Aorta (tissue), 5 donors: ENCODE measurements at regions of chr9 and their contacts with region 1.

Region 1: GRCh38 chr9:19379697-19380046 is 364 bp downstream of the RPS6 start:
- DNase-seq: peak in 1 of 2 donors; percentile 63
- ATAC-seq: peak; percentile 74
- H3K4me3 ChIP-seq: peak overlapping the region; percentile 5 to 54
- H3K27ac ChIP-seq: peak overlapping the region; percentile 49 to 73
- H3K4me1 ChIP-seq: no peaks in the 10 kb centered on the region
- H3K27me3 ChIP-seq: no peaks in the 10 kb centered on the region

Region 2: DNA sequence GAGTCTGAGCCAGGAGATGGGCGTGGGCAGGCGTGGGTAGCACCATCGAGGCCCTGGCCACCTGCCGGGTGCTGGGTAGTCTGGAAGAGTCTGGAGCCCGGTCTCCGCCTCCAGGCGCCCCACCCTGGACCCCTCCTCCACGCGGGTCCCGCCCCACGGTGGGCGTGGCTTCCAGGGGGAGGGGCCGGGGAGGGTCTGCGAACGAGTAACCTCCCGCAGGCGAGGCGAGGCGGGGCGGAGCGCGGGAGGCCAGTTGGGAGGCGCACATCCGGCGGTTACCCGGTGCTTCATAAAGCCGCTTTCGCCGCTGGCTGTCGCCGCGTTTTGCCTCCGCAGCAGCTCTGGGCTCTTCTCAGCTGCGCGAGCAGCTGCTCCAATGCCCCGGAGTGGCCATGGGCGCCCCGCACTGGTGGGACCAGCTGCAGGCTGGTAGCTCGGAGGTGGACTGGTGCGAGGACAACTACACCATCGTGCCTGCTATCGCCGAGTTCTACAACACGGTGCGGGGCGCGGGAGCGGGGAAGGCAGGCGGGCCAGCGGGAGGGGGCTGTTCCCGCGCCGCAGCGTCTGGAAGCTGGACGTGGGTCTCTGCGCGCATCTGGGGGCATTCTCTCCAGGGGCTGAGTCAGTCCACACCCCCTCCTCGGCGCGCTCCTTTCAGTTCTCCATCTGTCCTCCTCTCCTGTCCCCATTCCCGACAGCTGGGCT is 29.2 kb after region 1 on chr9 and contains the start of gene ACER2:
- intact Hi-C with region 1: loop called in 1 of 2 experiments (anchors 1 kb)
- DNase-seq: peak; percentile 96 to 99
- ATAC-seq: peak; percentile 98
- H3K4me3 ChIP-seq: peak within 1 kb of the TSS; percentile 37 to 74
- H3K27ac ChIP-seq: peak within 1 kb of the TSS in 1 of 2 donors; percentile 41
- H3K4me1 ChIP-seq: peaks cover 0 to 2% of the 10 kb centered on the region in 2 donors
- H3K27me3 ChIP-seq: no peaks in the 10 kb centered on the region
- total RNA-seq, gene ACER2: 4.9 to 11.2 TPM

Region 3: GRCh38 chr9:19431361-19432171 is 51.9 kb after region 1 on chr9:
- intact Hi-C with region 1: loop called in 1 of 2 experiments (anchors 10 kb)
- DNase-seq: peak; percentile 82 to 84
- ATAC-seq: peak; percentile 96
- H3K4me3 ChIP-seq: no peak overlapping the region
- H3K27ac ChIP-seq: peak overlapping the region; percentile 57 to 89
- H3K4me1 ChIP-seq: peaks cover 0 to 3% of the 10 kb centered on the region in 2 donors
- H3K27me3 ChIP-seq: no peaks in the 10 kb centered on the region

Region 4: GRCh38 chr9:19456996-19457692 is 77.5 kb after region 1 on chr9:
- intact Hi-C with region 1: loop called (anchors 5 kb)
- DNase-seq: peak in 1 of 2 donors; percentile 58
- ATAC-seq: peak; percentile 94
- H3K4me3 ChIP-seq: no peak overlapping the region
- H3K27ac ChIP-seq: peak overlapping the region; percentile 80 to 87
- H3K4me1 ChIP-seq: peaks cover 0 to 3% of the 10 kb centered on the region in 2 donors
- H3K27me3 ChIP-seq: no peaks in the 10 kb centered on the region

Region 5: GRCh38 chr9:19641046-19641445 is 261.4 kb after region 1 on chr9:
- intact Hi-C with region 1: no loop called
- DNase-seq: no peak
- ATAC-seq: no peak
- H3K4me3 ChIP-seq: no peak overlapping the region
- H3K27ac ChIP-seq: no peak overlapping the region
- H3K4me1 ChIP-seq: no peaks in the 10 kb centered on the region
- H3K27me3 ChIP-seq: no peaks in the 10 kb centered on the region